ENCODE measurements at regions of chr14 and their contacts with region 1.

Region 1: DNA sequence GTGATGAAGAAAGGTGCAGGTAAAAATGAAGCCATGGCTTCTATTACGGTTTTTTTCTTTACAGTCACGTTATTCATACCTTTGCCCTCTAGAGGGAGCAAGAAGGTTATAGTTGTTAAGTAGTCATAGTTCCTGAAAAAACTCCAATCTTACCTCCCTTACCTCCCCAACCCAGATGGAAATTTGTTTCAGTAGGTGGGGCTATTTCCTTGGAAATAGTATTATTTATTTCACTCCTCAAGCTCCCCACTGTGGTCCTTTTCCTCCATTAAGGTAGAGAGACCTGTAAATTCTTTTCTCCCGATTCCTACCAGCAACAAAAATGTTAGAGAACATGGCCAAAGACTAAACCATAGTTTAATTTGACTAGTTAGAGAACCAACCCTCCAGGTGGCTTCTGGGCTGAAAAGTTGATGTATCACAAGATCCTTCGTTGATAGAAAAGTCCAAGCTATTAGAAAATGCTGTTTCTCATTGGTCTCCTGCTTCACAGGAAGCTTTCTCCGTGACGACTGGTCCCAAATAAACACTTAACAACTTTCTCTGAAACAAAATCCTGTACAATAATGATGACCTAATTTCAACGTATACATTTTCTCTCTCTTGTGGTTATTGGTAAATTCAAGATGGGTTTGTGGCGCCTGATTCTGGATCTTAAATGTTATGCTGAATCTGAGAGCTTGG is 43.5 kb downstream of the TMX1 start:
- DNase-seq: no peak
- H3K4me3 ChIP-seq: no peak overlapping the region
- H3K27ac ChIP-seq: no peak overlapping the region
- H3K4me1 ChIP-seq: no peaks in the 10 kb centered on the region
- H3K27me3 ChIP-seq: no peaks in the 10 kb centered on the region
- CTCF ChIP-seq: peak; percentile 67 to 79 (median 68)

Region 2: GRCh38 chr14:50410921-50411320 is 872.6 kb before region 1 on chr14:
- intact Hi-C with region 1: no loop called
- DNase-seq: no peak
- H3K4me3 ChIP-seq: no peak overlapping the region
- H3K27ac ChIP-seq: no peak overlapping the region
- H3K4me1 ChIP-seq: no peaks in the 10 kb centered on the region
- H3K27me3 ChIP-seq: no peaks in the 10 kb centered on the region
- CTCF ChIP-seq: no peak

Region 3: GRCh38 chr14:51328064-51328771 is 44.7 kb after region 1 on chr14:
- intact Hi-C with region 1: no loop called
- DNase-seq: no peak
- H3K4me3 ChIP-seq: no peak overlapping the region
- H3K27ac ChIP-seq: peak overlapping the region; percentile 38 to 62
- H3K4me1 ChIP-seq: peaks cover 0 to 3% of the 10 kb centered on the region in 2 donors
- H3K27me3 ChIP-seq: no peaks in the 10 kb centered on the region
- CTCF ChIP-seq: no peak

Region 4: DNA sequence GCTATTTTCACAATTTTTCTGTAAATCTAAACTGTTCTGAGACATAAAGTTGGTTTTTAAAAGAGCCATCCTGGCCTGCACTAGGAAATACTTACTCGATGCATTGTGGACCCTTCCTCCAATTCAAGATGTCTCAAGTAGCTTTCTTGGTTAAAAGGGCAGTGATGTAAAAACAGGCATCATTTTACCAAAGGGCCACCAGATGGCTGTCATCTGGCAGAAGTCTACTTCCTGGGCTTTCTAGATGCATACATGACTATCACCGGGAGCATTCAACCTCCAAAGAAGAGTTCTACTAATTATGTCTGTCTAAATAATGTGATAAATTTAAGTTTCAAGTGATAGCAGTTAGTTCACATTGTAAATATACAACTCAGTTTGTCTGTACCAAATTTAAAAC is 271.4 kb after region 1 on chr14:
- intact Hi-C with region 1: loop called (anchors 10 kb)
- DNase-seq: no peak
- H3K4me3 ChIP-seq: no peak overlapping the region
- H3K27ac ChIP-seq: no peak overlapping the region
- H3K4me1 ChIP-seq: no peaks in the 10 kb centered on the region
- H3K27me3 ChIP-seq: no peaks in the 10 kb centered on the region
- CTCF ChIP-seq: no peak

Region 5: DNA sequence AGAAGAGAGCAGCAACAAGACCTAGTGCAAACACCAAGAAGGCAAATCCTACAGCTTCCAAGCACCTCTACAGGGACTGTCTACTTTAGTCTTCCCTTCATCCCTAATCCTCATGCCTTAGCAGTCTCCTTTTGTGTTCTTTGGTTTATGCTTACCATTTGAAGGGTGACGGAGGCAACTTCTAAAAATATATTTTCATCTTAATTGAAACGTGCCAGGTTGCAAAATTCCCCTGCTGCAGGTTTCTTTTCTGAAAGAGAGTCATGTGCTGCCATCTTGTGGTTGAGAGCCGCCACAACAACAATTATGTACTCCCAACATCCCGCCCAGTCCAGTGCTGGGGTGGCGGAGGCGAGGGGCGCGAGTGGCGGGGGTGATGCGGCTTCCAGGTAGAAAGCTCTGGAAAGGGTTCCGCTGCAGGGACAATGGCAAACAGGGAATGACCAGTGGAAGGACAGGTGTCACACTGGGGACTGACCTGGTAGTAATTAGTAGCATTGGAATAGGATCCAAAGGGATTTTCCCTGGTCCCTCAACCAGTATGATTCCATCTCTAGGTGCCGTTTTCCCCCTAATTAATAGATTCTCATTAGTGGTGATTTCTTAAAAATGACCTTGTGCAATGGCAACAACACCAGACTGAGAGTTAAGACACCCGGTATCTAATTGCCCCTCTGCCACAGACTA is 496.6 kb after region 1 on chr14:
- intact Hi-C with region 1: loop called (anchors 1 kb)
- DNase-seq: peak in 1 of 2 donors; percentile 87
- H3K4me3 ChIP-seq: no peak overlapping the region
- H3K27ac ChIP-seq: no peak overlapping the region
- H3K4me1 ChIP-seq: no peaks in the 10 kb centered on the region
- H3K27me3 ChIP-seq: no peaks in the 10 kb centered on the region
- CTCF ChIP-seq: peak; percentile 79 to 92 (median 86)